Spleen (tissue), 13 donors: ENCODE measurements at regions of chr1 and their contacts with region 1.

Region 1: GRCh38 chr1:110829955-110830553 is 42.9 kb upstream of the CD53 start:
- DNase-seq: no peak
- H3K4me3 ChIP-seq: no peak overlapping the region
- H3K27ac ChIP-seq: no peak overlapping the region
- H3K4me1 ChIP-seq: peaks cover 0 to 8% (median 0%) of the 10 kb centered on the region in 6 donors
- H3K27me3 ChIP-seq: no peaks in the 10 kb centered on the region
- CTCF ChIP-seq: peak; percentile 45 to 83 (median 72)
- POLR2A ChIP-seq: no peak

Region 2: DNA sequence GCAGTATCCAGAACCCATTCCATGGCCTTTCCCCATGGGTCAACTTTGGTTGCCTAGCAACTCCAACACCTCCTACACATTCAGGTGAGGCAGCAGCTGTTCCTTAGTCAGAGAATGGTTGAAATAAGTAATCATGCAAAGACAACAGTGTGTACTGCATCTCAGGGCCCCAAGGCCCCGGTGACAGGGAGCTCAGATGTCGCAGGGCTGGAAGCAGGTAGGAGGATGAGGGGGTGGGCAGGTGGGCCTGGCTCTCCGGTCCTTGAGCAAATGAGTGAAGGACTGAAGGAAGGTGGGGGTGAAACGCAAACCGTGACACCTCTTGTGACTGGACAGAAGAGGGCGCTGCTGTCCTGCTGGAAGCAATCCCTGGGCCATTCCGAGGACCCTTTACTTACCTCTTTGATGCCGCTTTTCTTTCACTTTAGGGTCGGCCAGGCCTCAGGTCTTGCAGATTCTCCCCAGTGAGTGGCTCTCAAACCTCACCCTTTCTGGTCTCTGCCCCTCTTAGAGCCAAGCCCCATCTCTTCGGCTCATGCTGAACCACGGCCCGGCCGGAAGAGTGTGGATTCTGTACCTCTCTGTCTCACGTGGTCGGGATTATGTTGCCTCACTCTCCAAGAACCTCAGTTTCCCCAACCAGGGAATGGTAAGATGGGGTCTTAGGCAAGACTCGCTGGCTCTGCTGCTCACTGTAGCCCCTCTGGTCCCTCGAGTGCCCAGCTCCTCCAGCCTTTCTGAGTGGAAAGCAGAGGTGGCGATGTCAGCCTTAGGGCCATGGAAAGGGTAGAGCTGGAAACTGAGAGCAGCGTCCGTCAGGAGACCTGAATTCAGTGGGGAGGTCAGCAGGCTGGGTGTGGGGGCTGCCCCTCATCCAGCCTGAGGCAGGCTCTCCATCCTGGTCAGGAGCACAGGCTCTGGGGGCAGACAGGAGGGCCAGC is 305.5 kb before region 1 on chr1:
- intact Hi-C with region 1: no loop called
- DNase-seq: no peak
- H3K4me3 ChIP-seq: peak overlapping the region in 2 of 8 donors; percentile 12 to 42
- H3K27ac ChIP-seq: no peak overlapping the region
- H3K4me1 ChIP-seq: peaks cover 0 to 15% (median 10%) of the 10 kb centered on the region in 6 donors
- H3K27me3 ChIP-seq: peaks cover 0 to 36% (median 3%) of the 10 kb centered on the region in 7 donors
- CTCF ChIP-seq: peak in 10 of 11 experiments; percentile 8 to 73 (median 62)
- POLR2A ChIP-seq: no peak

Region 3: DNA sequence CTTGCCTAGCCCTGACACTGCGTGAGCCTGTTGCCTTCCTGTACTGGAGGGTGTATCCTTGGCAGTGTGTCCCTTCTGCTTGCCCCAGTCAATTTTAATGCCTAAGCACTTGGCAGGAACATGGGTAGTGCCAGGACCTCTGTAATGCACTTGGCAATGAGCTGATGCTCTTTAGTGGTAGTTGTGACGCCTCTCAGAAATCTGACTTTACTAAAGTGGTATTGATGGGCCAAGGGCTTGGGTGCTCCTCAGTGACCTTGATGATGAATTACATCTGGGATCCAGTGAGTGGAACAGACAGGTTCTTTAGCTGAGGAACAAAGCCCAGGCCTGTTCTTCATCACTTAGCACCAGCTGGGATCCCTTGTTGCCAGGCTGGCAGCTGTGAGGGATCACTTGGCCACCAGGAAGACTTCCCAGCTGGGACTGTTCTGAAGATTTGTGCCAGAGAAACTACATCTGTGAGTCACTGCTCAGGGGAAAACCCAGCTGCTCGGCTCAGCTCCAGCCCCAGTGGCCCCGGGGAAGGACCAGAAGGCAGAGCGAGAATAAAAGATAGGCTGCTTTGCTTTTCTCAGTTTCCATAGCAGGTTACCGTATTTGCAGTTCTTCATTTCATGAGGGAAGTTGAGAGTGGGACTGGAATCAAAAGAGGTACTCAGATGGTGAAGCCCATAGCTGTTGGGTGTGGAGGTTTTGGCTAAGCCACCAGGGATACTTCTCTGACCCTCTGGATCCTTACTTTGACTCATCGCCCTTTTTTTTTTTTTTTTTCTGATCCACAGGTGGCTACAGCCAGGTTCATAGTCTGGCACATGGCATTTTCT is 195.4 kb before region 1 on chr1:
- intact Hi-C with region 1: no loop called
- DNase-seq: peak; percentile 87
- H3K4me3 ChIP-seq: no peak overlapping the region
- H3K27ac ChIP-seq: peak overlapping the region in 7 of 8 donors; percentile 46 to 85 (median 73)
- H3K4me1 ChIP-seq: peaks cover 35 to 96% (median 78%) of the 10 kb centered on the region in 6 donors
- H3K27me3 ChIP-seq: no peaks in the 10 kb centered on the region
- CTCF ChIP-seq: no peak
- POLR2A ChIP-seq: no peak

Region 4: GRCh38 chr1:110846861-110847260 is 16.8 kb after region 1 on chr1:
- intact Hi-C with region 1: loop called (anchors 1 kb)
- DNase-seq: no peak
- H3K4me3 ChIP-seq: no peak overlapping the region
- H3K27ac ChIP-seq: no peak overlapping the region
- H3K4me1 ChIP-seq: no peaks in the 10 kb centered on the region
- H3K27me3 ChIP-seq: no peaks in the 10 kb centered on the region
- CTCF ChIP-seq: no peak
- POLR2A ChIP-seq: no peak